ENCODE measurements at regions of chr15 and their contacts with region 1.

Region 1: GRCh38 chr15:61195116-61196002 is 33.7 kb downstream of the RORA start:
- DNase-seq: peak; percentile 68
- H3K4me3 Mint-ChIP-seq: no peak overlapping the region
- H3K27ac Mint-ChIP-seq: no peak overlapping the region
- H3K4me1 Mint-ChIP-seq: no peaks in the 10 kb centered on the region
- H3K27me3 Mint-ChIP-seq: peaks cover 31% of the 10 kb centered on the region

Region 2: GRCh38 chr15:61834076-61834697 is 638.8 kb after region 1 on chr15:
- intact Hi-C with region 1: loop called (anchors 10 kb)
- DNase-seq: peak; percentile 92
- H3K4me3 Mint-ChIP-seq: no peak overlapping the region
- H3K27ac Mint-ChIP-seq: no peak overlapping the region
- H3K4me1 Mint-ChIP-seq: peaks cover 5% of the 10 kb centered on the region
- H3K27me3 Mint-ChIP-seq: peaks cover 15% of the 10 kb centered on the region